AG04449 (cell line): ENCODE measurements at regions of chrX and their contacts with region 1.

Region 1: DNA sequence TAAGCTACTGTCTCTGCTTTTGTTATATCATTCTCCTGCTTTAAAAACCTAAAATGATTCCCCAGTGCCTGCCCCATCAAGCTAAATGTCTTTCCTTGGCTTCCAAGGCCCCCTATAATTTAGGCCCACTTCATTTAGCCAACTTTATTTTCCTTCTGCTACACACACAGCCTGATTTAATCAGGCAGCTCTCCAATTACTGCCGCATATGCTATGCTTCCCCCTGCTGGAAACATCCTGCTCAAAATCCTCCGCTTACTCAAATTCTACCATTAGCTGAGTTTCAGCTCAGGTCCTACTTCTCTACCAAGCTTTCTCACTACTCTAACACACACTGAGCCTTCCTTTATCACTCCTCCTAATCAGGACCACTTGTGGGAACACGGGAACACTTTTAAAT is 17.0 kb downstream of the LAMP2 start:
- DNase-seq: no peak
- H3K4me3 ChIP-seq: no peak overlapping the region
- CTCF ChIP-seq: peak; percentile 38

Region 2: DNA sequence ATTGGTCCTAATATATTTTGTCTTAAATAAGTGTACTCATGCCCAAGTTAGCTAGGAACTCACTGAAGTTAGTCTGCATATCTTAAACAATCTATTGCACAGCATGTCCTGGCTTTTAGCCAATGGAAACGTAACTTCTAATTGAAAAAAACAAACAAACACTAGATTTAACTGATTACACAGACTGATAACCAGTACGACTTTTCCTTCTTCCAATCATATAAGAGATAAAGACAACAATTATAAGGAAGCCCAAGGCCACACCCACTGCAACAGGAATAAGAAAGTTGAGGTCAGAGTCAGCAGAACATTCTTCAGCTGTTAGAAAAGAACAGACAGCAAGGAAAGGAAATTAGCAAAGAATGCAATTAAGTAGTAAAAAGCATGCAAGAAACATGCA is 23.8 kb before region 1 on chrX:
- CTCF ChIA-PET with region 1: interaction called, 11 read pairs
- POLR2A ChIA-PET with region 1: no interaction called
- DNase-seq: no peak
- H3K4me3 ChIP-seq: no peak overlapping the region
- CTCF ChIP-seq: no peak